ENCODE measurements at regions of chr17 and their contacts with region 1.

Region 1: GRCh38 chr17:58517734-58518609 is 3.5 kb upstream of the MTMR4 start:
- DNase-seq: peak; percentile 98 to 100 (median 99)
- ATAC-seq: peak; percentile 81
- H3K4me3 ChIP-seq: peak overlapping the region; percentile 72
- H3K4me3 Mint-ChIP-seq: peak overlapping the region; percentile 90
- H3K27ac ChIP-seq: peak overlapping the region; percentile 78 to 80
- H3K27ac Mint-ChIP-seq: peak overlapping the region; percentile 85
- H3K4me1 ChIP-seq: peaks cover 48% of the 10 kb centered on the region
- H3K4me1 Mint-ChIP-seq: peaks cover 44% of the 10 kb centered on the region
- H3K27me3 ChIP-seq: no peaks in the 10 kb centered on the region
- H3K27me3 Mint-ChIP-seq: no peaks in the 10 kb centered on the region
- CTCF ChIP-seq: no peak

Region 2: GRCh38 chr17:58006924-58007780 is 510.8 kb before region 1 on chr17 and contains the start of gene SRSF1:
- CTCF ChIA-PET with region 1: no interaction called
- POLR2A ChIA-PET with region 1: no interaction called
- intact Hi-C with region 1: loop called in 1 of 2 experiments (anchors 10 kb)
- DNase-seq: peak; percentile 95 to 100 (median 97)
- ATAC-seq: peak; percentile 86
- H3K4me3 ChIP-seq: peak within 1 kb of the TSS; percentile 83
- H3K4me3 Mint-ChIP-seq: peak within 1 kb of the TSS; percentile 98
- H3K27ac ChIP-seq: peak within 1 kb of the TSS; percentile 93 to 97
- H3K27ac Mint-ChIP-seq: peak within 1 kb of the TSS; percentile 99
- H3K4me1 ChIP-seq: peaks cover 29% of the 10 kb centered on the region
- H3K4me1 Mint-ChIP-seq: peaks cover 57% of the 10 kb centered on the region
- H3K27me3 ChIP-seq: no peaks in the 10 kb centered on the region
- H3K27me3 Mint-ChIP-seq: no peaks in the 10 kb centered on the region
- CTCF ChIP-seq: no peak
- total RNA-seq, gene SRSF1: 115 to 121 TPM

Region 3: GRCh38 chr17:58352014-58352842 is 165.7 kb before region 1 on chr17 and contains the start of gene SUPT4H1:
- CTCF ChIA-PET with region 1: no interaction called
- POLR2A ChIA-PET with region 1: interaction called, 5 read pairs
- intact Hi-C with region 1: loop called in 1 of 2 experiments (anchors 2 kb)
- DNase-seq: peak; percentile 83 to 98 (median 90)
- ATAC-seq: peak; percentile 87
- H3K4me3 ChIP-seq: peak within 1 kb of the TSS; percentile 78
- H3K4me3 Mint-ChIP-seq: peak within 1 kb of the TSS; percentile 99
- H3K27ac ChIP-seq: peak within 1 kb of the TSS; percentile 82 to 85
- H3K27ac Mint-ChIP-seq: peak within 1 kb of the TSS; percentile 98
- H3K4me1 ChIP-seq: peaks cover 31% of the 10 kb centered on the region
- H3K4me1 Mint-ChIP-seq: peaks cover 56% of the 10 kb centered on the region
- H3K27me3 ChIP-seq: no peaks in the 10 kb centered on the region
- H3K27me3 Mint-ChIP-seq: no peaks in the 10 kb centered on the region
- CTCF ChIP-seq: no peak
- total RNA-seq, gene SUPT4H1: 46.5 to 47.0 TPM

Region 4: DNA sequence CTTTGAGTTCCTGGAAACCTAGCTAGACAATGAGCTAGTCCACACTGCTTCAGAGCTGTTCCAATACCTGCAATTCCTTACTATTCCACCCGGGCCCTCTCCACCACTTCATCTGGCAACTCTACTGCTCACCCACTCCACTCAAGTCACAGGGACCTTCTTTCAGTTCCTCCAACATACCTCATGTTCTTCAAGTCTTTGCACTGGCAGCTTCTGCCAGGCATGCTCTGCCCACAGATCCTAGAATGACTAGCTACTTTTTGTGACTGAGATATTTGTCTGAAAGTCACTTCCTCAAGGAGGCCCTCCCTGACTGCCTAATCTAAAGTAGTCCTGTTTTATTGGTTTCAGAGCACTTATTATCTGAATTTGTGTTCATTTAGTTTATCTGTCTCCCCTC is 87.5 kb after region 1 on chr17:
- CTCF ChIA-PET with region 1: no interaction called
- POLR2A ChIA-PET with region 1: no interaction called
- intact Hi-C with region 1: no loop called
- DNase-seq: no peak
- ATAC-seq: no peak
- H3K4me3 ChIP-seq: no peak overlapping the region
- H3K4me3 Mint-ChIP-seq: no peak overlapping the region
- H3K27ac ChIP-seq: no peak overlapping the region
- H3K27ac Mint-ChIP-seq: no peak overlapping the region
- H3K4me1 ChIP-seq: no peaks in the 10 kb centered on the region
- H3K4me1 Mint-ChIP-seq: no peaks in the 10 kb centered on the region
- H3K27me3 ChIP-seq: no peaks in the 10 kb centered on the region
- H3K27me3 Mint-ChIP-seq: no peaks in the 10 kb centered on the region
- CTCF ChIP-seq: no peak

Region 5: GRCh38 chr17:58631523-58632323 is 113.8 kb after region 1 on chr17:
- CTCF ChIA-PET with region 1: interaction called, 6 read pairs
- POLR2A ChIA-PET with region 1: interaction called, 64 read pairs
- intact Hi-C with region 1: loop called (anchors 1 kb)
- DNase-seq: peak; percentile 85 to 97 (median 90)
- ATAC-seq: peak; percentile 89
- H3K4me3 ChIP-seq: peak overlapping the region; percentile 54
- H3K4me3 Mint-ChIP-seq: no peak overlapping the region
- H3K27ac ChIP-seq: peak overlapping the region; percentile 66 to 94
- H3K27ac Mint-ChIP-seq: no peak overlapping the region
- H3K4me1 ChIP-seq: peaks cover 10% of the 10 kb centered on the region
- H3K4me1 Mint-ChIP-seq: no peaks in the 10 kb centered on the region
- H3K27me3 ChIP-seq: no peaks in the 10 kb centered on the region
- H3K27me3 Mint-ChIP-seq: no peaks in the 10 kb centered on the region
- CTCF ChIP-seq: no peak

Region 6: DNA sequence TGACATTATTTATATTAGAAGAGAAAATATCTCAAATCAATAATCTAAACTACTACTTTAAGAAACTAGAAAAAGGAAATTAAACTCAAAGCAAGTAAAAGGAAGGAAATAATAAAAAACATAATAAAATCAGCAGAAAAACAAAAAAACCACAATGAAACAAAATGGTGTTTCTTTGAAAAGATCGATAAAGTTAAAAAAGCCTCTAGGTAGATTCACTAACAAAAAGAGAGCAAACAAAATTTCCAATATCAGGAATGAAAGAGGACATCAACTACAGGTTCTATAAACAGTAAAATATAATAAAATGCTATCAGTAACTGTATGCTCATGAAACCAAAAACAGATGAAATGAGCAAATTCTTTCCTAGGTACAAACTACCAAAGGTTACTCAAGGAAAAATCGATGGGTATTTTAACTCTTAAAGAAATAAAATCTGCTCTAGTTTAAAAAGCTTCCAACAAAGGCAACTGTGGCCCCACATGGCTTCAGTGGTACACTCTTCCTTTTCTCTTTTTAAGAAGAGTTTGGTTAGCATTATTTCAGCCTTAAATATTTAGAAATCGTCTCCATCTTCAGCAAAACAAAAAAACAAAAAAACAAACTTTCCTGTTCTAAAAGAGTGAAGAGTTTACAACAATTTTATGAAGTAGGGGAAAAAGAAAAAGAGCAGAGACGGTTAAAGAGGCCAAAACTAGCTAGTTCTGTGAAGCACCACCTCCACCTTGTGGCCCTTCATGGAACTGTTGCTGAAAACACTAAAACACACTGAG is 486.6 kb after region 1 on chr17:
- CTCF ChIA-PET with region 1: interaction called, 36 read pairs
- POLR2A ChIA-PET with region 1: interaction called, 18 read pairs
- intact Hi-C with region 1: loop called (anchors 1 kb)
- DNase-seq: peak; percentile 49 to 84 (median 66)
- ATAC-seq: peak; percentile 57
- H3K4me3 ChIP-seq: no peak overlapping the region
- H3K4me3 Mint-ChIP-seq: peak overlapping the region; percentile 45
- H3K27ac ChIP-seq: no peak overlapping the region
- H3K27ac Mint-ChIP-seq: peak overlapping the region; percentile 81
- H3K4me1 ChIP-seq: peaks cover 9% of the 10 kb centered on the region
- H3K4me1 Mint-ChIP-seq: peaks cover 12% of the 10 kb centered on the region
- H3K27me3 ChIP-seq: no peaks in the 10 kb centered on the region
- H3K27me3 Mint-ChIP-seq: no peaks in the 10 kb centered on the region
- CTCF ChIP-seq: peak; percentile 95

Region 7: DNA sequence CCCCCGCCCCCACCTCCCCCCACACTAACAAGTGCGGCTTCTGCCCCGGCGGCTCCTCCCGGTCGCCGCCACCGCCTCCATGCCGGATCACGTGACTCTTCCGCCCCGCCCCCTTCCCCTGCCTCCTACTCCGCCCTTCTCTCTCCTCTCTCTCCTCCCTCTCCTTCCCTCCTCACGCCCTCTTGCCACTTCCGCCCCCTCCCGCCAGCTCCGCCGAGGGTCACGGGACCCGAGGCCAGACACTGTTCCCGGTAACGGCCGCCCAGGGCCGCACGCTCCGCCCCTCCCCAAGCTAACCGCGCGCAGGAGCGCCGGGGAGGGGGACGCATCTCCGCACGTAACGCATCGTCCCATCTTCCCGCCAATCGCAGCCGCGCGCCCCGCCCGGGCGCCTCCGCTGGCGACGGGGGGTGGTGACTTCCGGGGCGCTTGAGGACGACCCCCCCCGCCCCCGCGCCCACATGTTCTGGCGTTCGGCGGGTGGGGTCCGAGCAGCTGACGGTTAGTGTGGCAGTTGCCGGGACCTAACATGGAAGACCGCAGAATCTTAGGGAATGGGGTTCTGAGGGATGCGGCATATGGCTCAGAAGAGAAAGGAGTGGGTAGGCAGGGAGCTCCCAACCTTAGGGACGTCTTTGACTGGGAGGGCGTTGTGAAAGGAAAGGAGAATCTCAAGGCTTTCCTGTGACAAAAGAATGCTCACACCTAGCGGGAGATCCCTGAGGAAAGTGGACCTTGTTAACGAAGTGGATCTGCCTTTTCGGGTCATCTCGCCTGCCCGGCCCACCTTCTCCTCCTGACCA is 1874.3 kb after region 1 on chr17 and contains the start of gene USP32:
- CTCF ChIA-PET with region 1: no interaction called
- POLR2A ChIA-PET with region 1: no interaction called
- intact Hi-C with region 1: loop called in 1 of 2 experiments (anchors 10 kb)
- DNase-seq: peak; percentile 94 to 99 (median 98)
- ATAC-seq: peak; percentile 87
- H3K4me3 ChIP-seq: peak within 1 kb of the TSS; percentile 97
- H3K4me3 Mint-ChIP-seq: peak within 1 kb of the TSS; percentile 98
- H3K27ac ChIP-seq: peak within 1 kb of the TSS; percentile 88 to 94
- H3K27ac Mint-ChIP-seq: peak within 1 kb of the TSS; percentile 91
- H3K4me1 ChIP-seq: peaks cover 28% of the 10 kb centered on the region
- H3K4me1 Mint-ChIP-seq: peaks cover 45% of the 10 kb centered on the region
- H3K27me3 ChIP-seq: no peaks in the 10 kb centered on the region
- H3K27me3 Mint-ChIP-seq: no peaks in the 10 kb centered on the region
- CTCF ChIP-seq: peak; percentile 50
- total RNA-seq, gene USP32: 23.9 to 24.7 TPM